A673 (cell line): ENCODE measurements at regions of chr7 and their contacts with region 1.

Region 1: DNA sequence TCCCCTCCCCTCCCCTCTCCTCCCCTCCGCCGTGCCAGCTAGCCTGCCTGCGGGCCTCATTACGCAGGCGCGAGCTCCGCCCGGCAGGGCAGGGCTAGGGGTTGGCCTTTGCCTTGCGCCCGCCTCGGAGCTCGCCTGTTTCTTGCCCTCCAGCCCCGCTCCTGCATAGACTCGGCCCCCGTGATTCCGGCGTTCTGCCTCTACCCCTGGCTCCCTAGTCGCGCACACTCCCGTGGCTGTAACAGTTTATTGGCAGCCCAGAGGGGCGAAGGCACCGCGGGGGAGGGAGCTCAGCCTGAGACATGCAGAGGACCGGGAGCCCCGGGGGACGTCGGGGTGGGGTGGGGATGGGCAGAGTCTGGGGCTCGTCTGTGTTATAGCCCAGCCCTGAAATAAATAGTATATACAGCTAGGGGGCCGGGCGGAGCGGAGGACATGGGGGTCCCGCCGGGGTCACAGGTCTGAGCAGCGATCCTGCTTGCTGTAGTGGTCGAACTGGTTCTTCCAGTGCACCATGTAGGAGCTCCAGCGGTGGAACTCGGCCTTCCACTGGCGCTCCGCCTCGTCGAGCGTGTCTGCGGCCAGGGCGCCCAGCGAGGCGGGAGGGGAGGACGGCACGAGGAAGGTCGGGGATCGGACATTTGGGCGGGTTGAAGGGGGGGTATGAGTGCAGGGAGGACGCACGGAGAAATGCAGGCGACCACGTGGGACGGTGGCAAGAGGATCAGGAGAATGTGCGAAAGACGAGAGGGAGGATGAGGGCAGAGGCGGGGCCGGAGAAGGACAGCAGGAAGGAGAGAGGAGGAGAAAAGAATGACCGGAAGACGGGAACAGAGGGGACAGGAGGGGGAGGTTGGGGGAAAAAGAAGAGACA is 483 bp upstream of the UFSP1 start:
- DNase-seq: peak; percentile 94
- H3K4me3 ChIP-seq: peak overlapping the region; percentile 56
- H3K27ac ChIP-seq: peak overlapping the region; percentile 55
- H3K4me1 ChIP-seq: peaks cover 24% of the 10 kb centered on the region
- H3K27me3 ChIP-seq: no peaks in the 10 kb centered on the region
- CTCF ChIP-seq: no peak

Region 2: GRCh38 chr7:100827330-100828227 is 62.4 kb before region 1 on chr7 and contains the start of gene EPHB4:
- CTCF ChIA-PET with region 1: no interaction called
- POLR2A ChIA-PET with region 1: no interaction called
- intact Hi-C with region 1: no loop called
- DNase-seq: peak; percentile 97
- H3K4me3 ChIP-seq: peak within 1 kb of the TSS; percentile 98
- H3K27ac ChIP-seq: peak within 1 kb of the TSS; percentile 80
- H3K4me1 ChIP-seq: peaks cover 8% of the 10 kb centered on the region
- H3K27me3 ChIP-seq: no peaks in the 10 kb centered on the region
- CTCF ChIP-seq: peak; percentile 67
- total RNA-seq, gene EPHB4: 90.4 and 92.6 TPM in 2 replicates

Region 3: GRCh38 chr7:101077303-101078089 is 187.5 kb after region 1 on chr7:
- CTCF ChIA-PET with region 1: interaction called, 11 read pairs
- POLR2A ChIA-PET with region 1: no interaction called
- intact Hi-C with region 1: loop called (anchors 5 kb)
- DNase-seq: peak; percentile 80
- H3K4me3 ChIP-seq: no peak overlapping the region
- H3K27ac ChIP-seq: no peak overlapping the region
- H3K4me1 ChIP-seq: no peaks in the 10 kb centered on the region
- H3K27me3 ChIP-seq: no peaks in the 10 kb centered on the region
- CTCF ChIP-seq: peak; percentile 96

Region 4: DNA sequence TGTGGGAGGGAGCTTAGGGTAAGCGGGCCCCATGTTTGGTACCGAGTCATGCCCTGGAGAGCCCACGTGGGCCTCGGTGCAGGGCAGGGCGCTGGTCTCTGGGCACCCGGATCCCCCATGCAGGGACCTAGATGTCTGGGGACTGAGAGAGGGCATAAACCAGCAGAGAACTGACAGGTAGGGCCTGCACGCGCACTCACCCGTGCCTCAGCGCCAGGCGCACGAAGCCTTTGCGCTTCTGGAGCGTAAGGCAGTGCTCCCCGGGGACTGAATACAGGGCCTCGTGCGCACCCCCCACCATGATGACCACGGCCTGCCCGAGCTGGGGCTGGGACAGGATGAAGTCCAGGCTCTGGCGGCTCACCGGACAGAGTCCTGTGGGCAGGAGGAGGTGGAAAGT is 308.0 kb after region 1 on chr7:
- CTCF ChIA-PET with region 1: no interaction called
- POLR2A ChIA-PET with region 1: interaction called, 5 read pairs
- intact Hi-C with region 1: loop called (anchors 10 kb)
- DNase-seq: no peak
- H3K4me3 ChIP-seq: no peak overlapping the region
- H3K27ac ChIP-seq: no peak overlapping the region
- H3K4me1 ChIP-seq: no peaks in the 10 kb centered on the region
- H3K27me3 ChIP-seq: no peaks in the 10 kb centered on the region
- CTCF ChIP-seq: no peak

Region 5: GRCh38 chr7:101244375-101245146 is 354.6 kb after region 1 on chr7 and contains the start of gene FIS1:
- CTCF ChIA-PET with region 1: no interaction called
- POLR2A ChIA-PET with region 1: no interaction called
- intact Hi-C with region 1: loop called (anchors 2 kb)
- DNase-seq: peak; percentile 94
- H3K4me3 ChIP-seq: peak within 1 kb of the TSS; percentile 86
- H3K27ac ChIP-seq: peak within 1 kb of the TSS; percentile 87
- H3K4me1 ChIP-seq: no peaks in the 10 kb centered on the region
- H3K27me3 ChIP-seq: no peaks in the 10 kb centered on the region
- CTCF ChIP-seq: peak; percentile 92
- total RNA-seq, gene FIS1: 74.1 and 79.6 TPM in 2 replicates

Region 6: DNA sequence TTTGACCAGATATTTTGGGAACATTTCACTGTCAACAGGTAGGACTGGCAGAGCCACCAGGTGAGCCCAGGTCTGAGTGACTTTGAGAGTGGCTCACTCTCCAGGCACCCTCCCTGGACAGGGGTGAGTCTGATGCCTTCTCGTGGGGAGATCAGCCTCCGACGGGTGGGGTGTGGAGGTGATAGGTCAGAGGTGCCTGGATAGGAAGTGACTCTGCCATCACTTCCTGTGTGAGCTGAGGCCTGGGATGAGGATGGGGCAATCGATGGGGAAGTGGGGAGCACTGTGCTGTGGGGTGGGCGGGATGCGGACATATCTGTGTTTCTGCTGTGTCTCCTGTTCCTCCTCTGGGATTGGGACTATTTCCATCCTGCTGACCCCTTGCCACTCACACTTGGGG is 397.0 kb after region 1 on chr7:
- CTCF ChIA-PET with region 1: no interaction called
- POLR2A ChIA-PET with region 1: no interaction called
- intact Hi-C with region 1: loop called (anchors 5 kb)
- DNase-seq: no peak
- H3K4me3 ChIP-seq: no peak overlapping the region
- H3K27ac ChIP-seq: no peak overlapping the region
- H3K4me1 ChIP-seq: no peaks in the 10 kb centered on the region
- H3K27me3 ChIP-seq: peaks cover 7% of the 10 kb centered on the region
- CTCF ChIP-seq: no peak